ENCODE measurements at regions of chr1 and their contacts with region 1.

Region 1: DNA sequence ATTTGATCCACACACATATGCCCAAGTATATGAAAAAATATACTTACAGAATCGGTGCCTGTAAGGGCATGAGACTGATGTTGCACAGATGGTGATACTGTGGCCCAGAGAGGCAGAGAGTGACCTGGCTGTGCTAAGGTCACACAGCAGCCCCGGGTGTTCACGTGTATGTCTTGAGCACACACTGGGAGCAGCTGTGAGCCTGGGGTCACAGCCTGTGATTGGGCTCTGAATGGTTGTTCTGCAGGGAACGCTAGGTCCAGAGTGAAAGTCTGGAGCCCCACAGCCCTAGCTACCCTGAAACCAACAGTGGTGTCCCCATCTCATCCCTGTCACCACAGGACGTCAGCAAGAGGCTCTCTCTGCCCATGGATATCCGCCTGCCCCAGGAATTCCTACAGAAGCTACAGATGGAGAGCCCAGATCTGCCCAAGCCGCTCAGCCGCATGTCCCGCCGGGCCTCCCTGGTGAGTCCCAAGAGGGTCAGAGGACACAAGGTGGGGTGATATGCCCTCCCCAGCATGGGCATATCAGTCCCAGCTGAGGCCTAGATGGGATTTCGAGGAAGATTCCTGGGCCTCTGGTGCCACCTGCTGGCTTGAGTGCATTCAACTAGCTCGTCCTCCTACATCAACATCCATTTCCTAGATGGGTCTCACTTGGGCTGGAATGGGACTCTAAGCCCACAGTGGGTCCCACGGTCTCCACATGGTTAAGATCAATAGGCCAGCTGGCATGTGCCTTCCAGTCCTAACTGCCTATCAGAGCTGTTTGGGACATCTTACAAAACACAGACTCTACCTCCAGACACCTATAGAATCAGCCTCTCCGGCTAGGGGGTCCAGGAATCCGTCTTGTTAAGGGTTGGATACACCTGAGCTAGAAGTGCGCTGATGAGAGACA is 19.7 kb downstream of the CDK18 start:
- DNase-seq: peak; percentile 92

Region 2: DNA sequence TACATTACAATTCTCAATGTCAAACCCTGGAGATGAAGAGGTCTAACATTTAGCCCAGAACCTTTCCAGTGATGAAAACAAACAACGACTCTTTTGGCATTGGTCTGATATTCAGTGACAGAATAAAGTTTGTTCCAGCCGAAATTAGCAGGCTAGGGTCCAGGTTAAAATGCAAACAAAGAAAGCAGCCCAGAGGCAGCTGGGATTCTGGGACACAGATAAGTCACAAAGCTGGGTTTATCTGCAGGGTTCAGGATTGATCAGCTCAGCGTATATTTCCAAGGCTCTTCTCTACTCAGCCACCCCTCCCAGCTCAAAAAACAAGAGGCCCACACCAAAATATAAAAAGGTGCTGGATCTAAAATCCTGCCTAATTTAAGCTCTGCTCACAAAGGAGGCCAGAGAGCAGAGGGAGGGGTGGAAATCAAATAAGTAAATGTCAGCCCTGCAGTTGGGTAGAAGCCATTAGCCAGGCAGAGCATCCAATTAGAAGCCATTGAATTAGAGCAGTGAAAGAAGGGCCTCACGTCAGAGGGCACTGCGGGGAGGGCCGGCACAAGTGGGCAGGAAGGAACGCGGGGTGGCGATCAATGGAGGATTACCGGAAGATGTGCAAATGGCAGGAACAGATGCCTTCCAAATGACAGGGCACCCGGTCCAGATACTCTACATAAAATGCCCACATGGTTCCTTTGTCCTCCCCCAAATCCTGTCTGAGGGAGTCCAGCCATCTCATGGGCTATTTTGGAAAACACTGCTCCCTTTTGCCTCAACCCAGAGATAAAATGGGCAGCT is 164.2 kb before region 1 on chr1:
- in situ Hi-C with region 1: loop called (anchors 5 kb)
- DNase-seq: peak; percentile 93

Region 3: GRCh38 chr1:205458777-205459566 is 65.2 kb before region 1 on chr1:
- in situ Hi-C with region 1: no loop called
- DNase-seq: peak; percentile 25

Measured in G401 (cell line).